SK-N-SH (cell line): ENCODE measurements at regions of chr11 and their contacts with region 1.

Region 1: DNA sequence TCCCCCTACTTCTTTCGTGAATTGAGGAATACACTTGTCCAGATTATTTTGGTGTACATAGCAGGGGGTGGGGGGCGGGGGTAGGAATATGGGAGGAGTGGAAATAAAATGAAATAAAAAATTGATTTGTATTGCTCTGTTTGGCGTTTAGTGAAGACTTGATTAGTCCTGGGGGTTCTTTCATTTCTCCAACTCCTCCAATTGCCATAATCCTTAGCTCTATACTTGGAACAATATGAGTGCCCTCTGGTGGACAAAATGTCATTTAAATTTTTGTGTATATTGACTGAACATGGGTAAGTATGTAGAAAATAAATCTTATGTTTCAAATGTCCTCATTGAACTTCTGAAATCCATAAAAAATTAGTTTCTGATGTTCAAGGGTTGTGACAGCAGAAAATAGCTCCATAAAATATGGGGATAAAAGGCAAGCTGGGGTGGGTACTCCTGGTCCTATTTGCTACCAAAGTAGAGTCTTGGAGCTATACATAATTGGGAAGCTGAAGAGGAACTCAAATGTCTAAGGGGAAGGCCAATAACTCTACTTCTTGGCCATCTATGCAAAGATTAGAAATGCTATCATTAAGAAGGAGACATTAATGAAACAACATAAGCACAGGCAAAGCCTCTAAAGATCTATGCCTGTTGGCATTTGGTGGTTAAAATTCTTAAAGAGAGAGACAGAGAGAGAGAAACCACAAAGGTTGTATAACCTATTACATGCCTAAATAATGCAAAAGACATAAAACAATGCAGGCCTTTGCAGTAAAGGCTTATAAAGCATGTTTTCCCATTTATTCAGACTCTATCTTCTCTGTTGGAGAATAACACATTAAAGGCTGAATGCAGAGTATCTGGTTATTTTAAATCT is 421.6 kb downstream of the METTL15 start:
- DNase-seq: peak; percentile 32
- H3K4me3 ChIP-seq: no peak overlapping the region; a peak in 1 of 4 replicates
- H3K27ac ChIP-seq: no peak overlapping the region
- H3K4me1 ChIP-seq: no peaks in the 10 kb centered on the region
- H3K27me3 ChIP-seq: no peaks in the 10 kb centered on the region
- CTCF ChIP-seq: peak; percentile 54
- EP300 ChIP-seq: no peak
- RAD21 ChIP-seq: peak; percentile 76

Region 2: DNA sequence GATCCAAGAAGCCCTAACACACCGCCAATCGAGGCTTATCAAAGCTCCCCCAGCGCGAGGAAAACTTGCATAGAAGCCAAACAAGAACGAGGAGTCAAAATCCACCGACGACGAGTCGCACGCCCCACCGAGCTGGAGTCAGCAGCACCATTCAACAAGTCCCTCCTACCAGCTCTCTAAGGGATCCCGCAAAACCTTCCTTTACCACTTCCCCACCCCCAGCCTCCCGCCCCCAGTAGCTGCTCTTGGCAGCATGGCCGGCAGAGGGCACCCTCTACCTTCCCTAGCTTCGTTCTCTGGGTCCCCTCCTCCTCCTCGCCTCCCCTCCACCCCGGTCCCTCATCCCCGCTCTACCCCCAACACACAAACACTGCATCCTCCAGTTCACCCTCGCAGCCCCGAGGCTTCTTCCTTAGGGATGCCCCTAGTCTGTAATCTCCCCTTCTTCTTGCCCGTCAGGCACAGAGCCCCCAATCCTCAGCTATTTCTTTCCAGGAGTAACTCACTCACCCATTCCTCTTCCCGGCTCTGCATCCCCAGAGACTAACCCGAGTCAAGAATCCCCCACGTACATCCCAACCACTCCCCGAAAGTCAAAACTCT is 830.8 kb before region 1 on chr11:
- CTCF ChIA-PET with region 1: interaction called, 134 read pairs
- POLR2A ChIA-PET with region 1: no interaction called
- DNase-seq: peak; percentile 90
- H3K4me3 ChIP-seq: peak overlapping the region; percentile 84 to 92
- H3K27ac ChIP-seq: peak overlapping the region; percentile 62 to 73
- H3K4me1 ChIP-seq: peaks cover 6 to 21% of the 10 kb centered on the region in 2 experiments; a peak in 2 of 4 replicates
- H3K27me3 ChIP-seq: no peaks in the 10 kb centered on the region
- CTCF ChIP-seq: peak; percentile 75
- EP300 ChIP-seq: no peak
- RAD21 ChIP-seq: peak; percentile 80

Region 3: GRCh38 chr11:27720277-27720830 is 809.4 kb before region 1 on chr11:
- CTCF ChIA-PET with region 1: interaction called, 31 read pairs
- POLR2A ChIA-PET with region 1: interaction called, 3 read pairs
- DNase-seq: peak; percentile 62
- H3K4me3 ChIP-seq: peak overlapping the region; percentile 77 to 90; a peak in 3 of 4 replicates
- H3K27ac ChIP-seq: no peak overlapping the region
- H3K4me1 ChIP-seq: peaks cover 5 to 21% of the 10 kb centered on the region in 2 experiments; a peak in 3 of 4 replicates
- H3K27me3 ChIP-seq: peaks cover 9% of the 10 kb centered on the region; the same call in 1 of the 2 replicates
- CTCF ChIP-seq: peak; percentile 57
- EP300 ChIP-seq: no peak
- RAD21 ChIP-seq: no peak

Region 4: DNA sequence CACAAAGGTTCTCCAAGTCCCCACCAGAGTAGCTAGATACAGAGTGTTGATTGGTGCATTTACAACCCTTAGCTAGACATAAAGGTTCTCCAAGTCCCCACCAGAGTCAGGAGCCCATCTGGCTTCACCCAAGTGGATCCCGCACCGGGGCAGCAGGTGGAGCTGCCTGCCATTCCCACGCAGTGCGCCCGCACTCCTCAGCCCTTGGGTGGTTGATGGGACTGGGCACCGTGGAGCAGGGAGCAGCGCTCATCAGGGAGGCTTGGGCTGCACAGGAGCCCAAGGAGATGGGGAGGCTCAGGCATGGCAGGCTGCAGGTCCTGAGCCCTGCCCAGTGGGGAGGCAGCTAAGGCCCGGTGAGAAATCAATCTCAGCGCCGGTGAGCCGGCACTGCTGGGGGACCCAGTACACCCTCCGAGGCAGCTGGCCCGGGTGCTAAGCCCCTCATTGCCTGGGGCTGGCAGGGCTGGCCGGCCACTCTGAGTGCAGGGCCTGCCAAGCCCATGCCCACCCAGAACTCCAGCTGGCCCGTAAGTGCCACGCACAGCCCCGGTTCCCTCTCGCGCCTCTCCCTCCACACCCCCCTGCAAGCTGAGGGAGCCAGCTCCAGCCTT is 17.5 kb before region 1 on chr11:
- CTCF ChIA-PET with region 1: interaction called, 11 read pairs
- POLR2A ChIA-PET with region 1: no interaction called
- DNase-seq: no peak
- H3K4me3 ChIP-seq: no peak overlapping the region
- H3K27ac ChIP-seq: no peak overlapping the region
- H3K4me1 ChIP-seq: no peaks in the 10 kb centered on the region
- H3K27me3 ChIP-seq: no peaks in the 10 kb centered on the region
- CTCF ChIP-seq: no peak
- EP300 ChIP-seq: no peak
- RAD21 ChIP-seq: no peak

Region 5: DNA sequence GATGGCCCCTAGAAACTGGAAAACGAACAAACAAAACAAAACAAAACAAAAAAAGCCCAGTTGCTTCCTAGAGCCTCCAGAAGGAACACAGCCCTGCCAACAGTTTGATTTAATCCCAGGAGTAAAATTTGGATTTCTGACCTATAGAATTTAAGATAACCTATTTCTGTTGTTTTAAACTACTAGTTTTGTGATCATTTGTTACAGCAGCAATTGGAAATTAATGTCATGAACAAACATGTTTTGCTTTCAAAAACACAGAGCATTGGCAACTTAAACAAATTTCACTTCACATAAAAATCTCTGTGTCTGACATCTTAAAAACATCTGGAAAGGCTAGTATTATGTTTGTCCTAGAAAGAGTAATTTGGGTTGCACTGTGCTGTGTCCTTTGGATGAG is 15.8 kb after region 1 on chr11:
- CTCF ChIA-PET with region 1: interaction called, 16 read pairs
- POLR2A ChIA-PET with region 1: no interaction called
- DNase-seq: no peak
- H3K4me3 ChIP-seq: no peak overlapping the region
- H3K27ac ChIP-seq: no peak overlapping the region
- H3K4me1 ChIP-seq: no peaks in the 10 kb centered on the region; a peak in 2 of 4 replicates
- H3K27me3 ChIP-seq: no peaks in the 10 kb centered on the region
- CTCF ChIP-seq: no peak
- EP300 ChIP-seq: no peak
- RAD21 ChIP-seq: no peak